GM18951 (cell line): ENCODE measurements at regions of chr15 and their contacts with region 1.

Region 1: GRCh38 chr15:44066316-44066740 is 128.7 kb downstream of the FRMD5 start:
- POLR2A ChIP-seq: no peak

Region 2: DNA sequence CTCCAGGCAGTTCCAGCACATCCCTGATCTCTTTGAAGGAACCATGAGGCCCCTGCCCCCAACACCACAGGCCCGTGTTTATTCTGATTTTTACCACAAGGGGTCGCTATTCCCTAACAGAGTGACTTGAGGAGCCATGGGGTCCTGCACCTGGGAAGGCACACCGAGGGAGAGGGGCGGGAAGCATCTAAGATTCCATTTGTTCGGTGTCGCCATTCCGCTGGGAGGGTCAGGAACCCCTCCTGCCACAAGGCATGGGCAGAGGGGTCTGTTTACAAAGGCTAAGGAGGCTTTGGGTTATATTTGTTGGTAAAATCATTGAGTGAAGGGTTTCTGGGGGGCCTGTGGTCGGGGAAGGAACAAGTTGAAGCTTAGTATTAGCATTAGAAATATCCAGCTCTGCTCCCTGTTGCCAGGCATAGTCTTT is 162.5 kb before region 1 on chr15:
- in situ Hi-C with region 1: loop called (anchors 5 kb)
- POLR2A ChIP-seq: no peak

Region 3: GRCh38 chr15:44286814-44287452 is 220.6 kb after region 1 on chr15:
- in situ Hi-C with region 1: no loop called
- POLR2A ChIP-seq: no peak